Left lung (tissue), 14 donors: ENCODE measurements at regions of chr1 and their contacts with region 1.

Region 1: GRCh38 chr1:94522304-94522703 is 19.3 kb downstream of the F3 start:
- DNase-seq: peak in 1 of 4 donors; percentile 64
- ATAC-seq: peak; percentile 75
- H3K4me3 ChIP-seq: no peak overlapping the region
- H3K27ac ChIP-seq: no peak overlapping the region
- H3K4me1 ChIP-seq: no peaks in the 10 kb centered on the region
- H3K27me3 ChIP-seq: no peaks in the 10 kb centered on the region
- CTCF ChIP-seq: peak in 1 of 2 donors; percentile 35

Region 2: GRCh38 chr1:94801919-94802546 is 279.7 kb after region 1 on chr1:
- intact Hi-C with region 1: loop called (anchors 5 to 10 kb)
- DNase-seq: peak in 2 of 4 donors; percentile 70 to 78
- ATAC-seq: peak; percentile 85
- H3K4me3 ChIP-seq: no peak overlapping the region
- H3K27ac ChIP-seq: peak overlapping the region; percentile 62 to 71
- H3K4me1 ChIP-seq: peaks cover 12 to 59% of the 10 kb centered on the region in 2 donors
- H3K27me3 ChIP-seq: no peaks in the 10 kb centered on the region
- CTCF ChIP-seq: no peak